HAP-1 (cell line): ENCODE measurements at regions of chr1 and their contacts with region 1.

Region 1: GRCh38 chr1:25819576-25820246 is at the start of gene MTFR1L:
- DNase-seq: peak; percentile 75 to 94
- H3K4me3 ChIP-seq: peak within 1 kb of the TSS; percentile 87
- H3K4me1 ChIP-seq: peaks cover 17% of the 10 kb centered on the region
- H3K27me3 ChIP-seq: no peaks in the 10 kb centered on the region

Region 2: GRCh38 chr1:25239681-25240541 is 579.8 kb before region 1 on chr1:
- in situ Hi-C with region 1: loop called (anchors 10 kb)
- DNase-seq: peak; percentile 89 to 92
- H3K4me3 ChIP-seq: peak overlapping the region; percentile 36
- H3K4me1 ChIP-seq: peaks cover 5% of the 10 kb centered on the region; the same call in 1 of the 2 replicates
- H3K27me3 ChIP-seq: no peaks in the 10 kb centered on the region

Region 3: GRCh38 chr1:25425098-25426085 is 394.3 kb before region 1 on chr1:
- in situ Hi-C with region 1: loop called (anchors 25 kb)
- DNase-seq: no peak
- H3K4me3 ChIP-seq: no peak overlapping the region
- H3K4me1 ChIP-seq: peaks cover 4% of the 10 kb centered on the region; the same call in 1 of the 2 replicates
- H3K27me3 ChIP-seq: no peaks in the 10 kb centered on the region